ENCODE measurements at regions of chr6 and their contacts with region 1.

Region 1: DNA sequence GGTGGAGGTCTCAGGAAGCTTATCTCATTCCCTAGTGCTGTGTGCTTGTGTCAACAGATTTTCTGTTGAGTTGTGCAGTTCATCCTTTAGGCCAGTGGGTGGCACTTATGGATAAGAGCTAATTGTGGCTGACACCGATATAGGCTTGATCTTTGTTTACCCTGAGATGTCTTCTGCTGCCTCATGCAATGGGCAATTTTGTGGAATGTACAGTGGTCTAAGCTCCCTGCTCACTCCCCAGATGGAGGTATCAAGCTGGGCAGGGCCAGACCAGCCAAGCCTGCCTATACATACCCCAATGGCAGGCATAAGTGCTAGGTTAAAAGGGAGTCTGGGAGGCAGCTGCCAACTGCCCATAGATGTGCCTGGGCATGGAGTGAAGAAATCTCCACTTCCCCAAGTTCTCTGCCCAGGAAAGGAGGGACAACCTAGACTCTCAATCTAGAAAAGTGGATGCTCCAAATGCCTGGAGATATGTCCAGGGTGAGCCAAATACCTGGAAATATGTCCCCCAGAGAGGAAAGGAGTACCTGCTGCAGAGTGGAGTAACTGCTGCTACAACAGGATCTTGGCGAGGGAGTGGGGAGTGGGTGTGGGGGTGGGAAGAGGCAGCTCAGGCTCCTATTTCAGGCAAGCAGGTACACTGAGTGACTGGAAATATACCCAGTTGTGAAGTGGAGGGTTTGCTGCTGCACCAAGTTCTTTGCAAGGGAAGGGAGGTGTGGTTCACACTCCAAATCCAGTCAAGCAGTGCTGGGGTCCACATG is 53.2 kb upstream of the ARG1 start:
- DNase-seq: no peak
- H3K4me3 ChIP-seq: no peak overlapping the region
- H3K27ac ChIP-seq: no peak overlapping the region
- H3K27me3 ChIP-seq: no peaks in the 10 kb centered on the region
- CTCF ChIP-seq: peak; percentile 67

Region 2: DNA sequence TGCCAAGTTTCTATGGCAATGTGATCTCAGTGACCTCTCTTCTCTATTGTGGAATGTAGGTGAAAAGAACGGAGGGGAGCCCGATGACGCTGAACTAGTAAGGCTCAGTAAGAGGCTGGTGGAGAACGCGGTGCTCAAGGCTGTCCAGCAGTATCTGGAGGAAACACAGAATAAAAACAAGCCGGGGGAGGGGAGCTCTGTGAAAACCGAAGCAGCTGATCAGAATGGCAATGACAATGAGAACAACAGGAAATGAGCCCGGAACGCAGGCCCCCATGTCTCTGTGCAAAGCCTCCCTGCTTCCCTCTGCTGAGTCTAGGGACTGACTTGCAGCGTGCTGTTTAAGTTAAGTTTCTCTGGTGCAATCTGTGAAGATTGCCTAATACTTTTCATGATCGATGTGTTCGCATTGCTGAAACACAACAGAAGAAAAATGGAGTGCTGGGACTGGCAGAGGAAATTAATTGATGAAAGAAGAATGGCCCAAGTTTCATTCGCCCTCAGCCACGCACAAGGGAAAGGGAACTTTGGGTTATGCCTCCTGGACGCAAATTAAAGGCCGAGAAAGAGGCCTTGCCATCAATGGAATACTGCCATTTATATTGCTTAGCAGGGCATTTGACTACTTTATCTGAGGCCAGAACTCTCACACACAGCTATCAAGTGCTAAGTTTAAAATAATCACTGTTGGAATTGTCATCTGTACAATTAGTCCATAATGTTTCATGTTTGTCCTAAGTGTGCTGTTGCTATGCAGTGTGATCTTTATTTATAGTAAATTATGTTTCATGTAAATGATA is 238.2 kb before region 1 on chr6:
- CTCF ChIA-PET with region 1: no interaction called
- POLR2A ChIA-PET with region 1: no interaction called
- DNase-seq: no peak
- H3K4me3 ChIP-seq: no peak overlapping the region
- H3K27ac ChIP-seq: no peak overlapping the region
- H3K27me3 ChIP-seq: no peaks in the 10 kb centered on the region
- CTCF ChIP-seq: no peak

Region 3: DNA sequence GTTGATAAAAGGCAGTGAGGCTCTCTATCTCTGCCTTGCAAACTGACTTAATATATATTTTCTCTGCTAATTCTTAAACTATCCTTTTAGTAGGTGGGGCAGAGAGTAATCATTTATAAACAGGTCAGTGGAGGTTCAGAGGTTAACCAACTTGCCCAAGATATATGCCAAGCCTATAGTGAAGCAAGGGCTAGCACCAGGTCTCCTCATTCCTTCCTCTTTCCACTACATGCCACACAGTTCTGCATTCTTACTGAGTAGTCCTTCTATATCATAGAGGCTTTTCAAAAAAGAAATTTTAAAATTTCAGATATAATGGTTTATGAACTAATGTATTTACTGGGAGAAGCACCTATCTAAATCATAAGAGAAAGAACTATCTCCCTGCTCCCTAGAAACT is 61.7 kb after region 1 on chr6:
- CTCF ChIA-PET with region 1: interaction called, 12 read pairs
- POLR2A ChIA-PET with region 1: no interaction called
- DNase-seq: no peak
- H3K4me3 ChIP-seq: no peak overlapping the region
- H3K27ac ChIP-seq: no peak overlapping the region
- H3K27me3 ChIP-seq: no peaks in the 10 kb centered on the region
- CTCF ChIP-seq: no peak

Region 4: DNA sequence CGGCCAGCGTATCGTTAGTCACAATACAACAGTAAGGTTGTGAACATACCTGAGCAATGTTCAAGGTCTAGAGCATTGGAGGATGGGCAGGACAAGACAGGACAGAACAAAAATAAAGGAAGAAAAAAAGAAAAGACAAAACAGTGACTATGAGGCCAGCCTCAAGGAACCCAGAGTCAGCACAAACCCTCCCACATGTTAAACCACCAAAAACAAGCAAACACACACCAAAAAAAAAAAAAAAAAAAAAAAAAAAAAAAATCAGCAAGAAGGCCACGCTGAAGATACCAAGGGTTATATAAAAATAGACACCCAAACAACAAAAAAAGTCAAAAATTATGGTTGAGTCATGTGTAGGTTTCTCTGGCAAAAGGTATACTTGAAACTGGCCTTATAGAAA is 95.4 kb after region 1 on chr6:
- CTCF ChIA-PET with region 1: no interaction called
- POLR2A ChIA-PET with region 1: no interaction called
- DNase-seq: no peak
- H3K4me3 ChIP-seq: no peak overlapping the region
- H3K27ac ChIP-seq: no peak overlapping the region
- H3K27me3 ChIP-seq: no peaks in the 10 kb centered on the region
- CTCF ChIP-seq: no peak

Region 5: GRCh38 chr6:131721161-131721560 is 201.3 kb after region 1 on chr6:
- CTCF ChIA-PET with region 1: no interaction called
- POLR2A ChIA-PET with region 1: no interaction called
- DNase-seq: no peak
- H3K4me3 ChIP-seq: no peak overlapping the region
- H3K27ac ChIP-seq: no peak overlapping the region
- H3K27me3 ChIP-seq: no peaks in the 10 kb centered on the region
- CTCF ChIP-seq: no peak